GM12878 (cell line): ENCODE measurements at regions of chr11 and their contacts with region 1.

Region 1: DNA sequence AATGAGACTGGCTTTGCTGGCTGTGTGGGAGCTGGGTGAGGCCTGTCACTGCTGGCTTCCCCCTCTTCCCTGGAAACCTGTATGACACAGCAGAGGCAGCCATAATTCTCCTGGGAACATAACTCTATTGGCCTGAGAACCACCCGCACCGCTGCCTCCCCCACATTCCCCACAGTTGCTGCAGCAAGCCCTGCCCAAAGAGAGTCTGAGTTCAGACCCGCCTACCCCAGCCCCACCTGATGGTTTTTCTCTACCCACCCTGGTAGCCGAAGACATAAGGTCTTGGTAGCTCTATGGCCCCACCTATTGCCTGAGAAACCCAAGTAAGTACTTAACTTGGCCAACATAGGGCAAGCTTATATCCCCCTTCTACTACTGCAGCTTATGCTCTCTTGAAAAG is 174.8 kb downstream of the C11orf91 start:
- DNase-seq: no peak
- ATAC-seq: no peak; the same call in 2 of the 3 replicates
- H3K4me3 ChIP-seq: no peak overlapping the region
- H3K27ac ChIP-seq: no peak overlapping the region
- H3K4me1 ChIP-seq: no peaks in the 10 kb centered on the region
- H3K27me3 ChIP-seq: no peaks in the 10 kb centered on the region
- CTCF ChIP-seq: no peak
- EP300 ChIP-seq: no peak
- POLR2A ChIP-seq: no peak
- RAD21 ChIP-seq: peak; percentile 45; the same call in 1 of the 2 replicates

Region 2: DNA sequence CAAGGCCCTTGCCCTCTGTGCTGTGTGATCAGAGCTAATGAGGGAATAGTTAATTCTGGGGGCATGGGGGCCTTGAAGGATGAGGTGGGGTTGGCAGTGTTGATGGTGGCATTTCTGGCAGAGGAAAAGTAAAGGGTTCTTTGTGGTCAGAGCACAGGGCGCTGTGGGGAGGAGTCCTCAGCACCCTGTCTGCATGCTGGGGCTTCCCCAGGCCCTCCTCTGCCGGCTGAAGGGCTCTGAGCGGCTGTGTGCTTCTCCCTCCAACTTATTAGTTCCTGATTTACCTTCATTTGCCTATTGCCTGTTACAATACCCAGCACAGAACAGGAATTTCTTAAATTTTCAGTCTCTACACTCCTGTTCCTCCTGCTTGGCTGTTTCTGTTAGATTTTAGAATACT is 145.8 kb before region 1 on chr11:
- CTCF ChIA-PET with region 1: no interaction called
- POLR2A ChIA-PET with region 1: interaction called, 3 read pairs
- RAD21 ChIA-PET with region 1: interaction called, 3 read pairs
- SMC1A ChIA-PET with region 1: no interaction called
- in situ Hi-C with region 1: no loop called
- intact Hi-C with region 1: loop called (anchors 5 kb)
- DNase-seq: no peak
- ATAC-seq: peak; percentile 86
- H3K4me3 ChIP-seq: no peak overlapping the region
- H3K27ac ChIP-seq: no peak overlapping the region
- H3K4me1 ChIP-seq: peaks cover 26% of the 10 kb centered on the region
- H3K27me3 ChIP-seq: no peaks in the 10 kb centered on the region; a peak in 2 of 4 replicates
- CTCF ChIP-seq: no peak
- EP300 ChIP-seq: no peak
- POLR2A ChIP-seq: no peak
- RAD21 ChIP-seq: no peak